Left lung (tissue), 14 donors: ENCODE measurements at regions of chrX and their contacts with region 1.

Region 1: GRCh38 chrX:12906046-12906761 is at the start of gene TLR8:
- DNase-seq: no peak
- ATAC-seq: no peak
- H3K4me3 ChIP-seq: peak within 1 kb of the TSS in 1 of 2 donors; percentile 41
- H3K27ac ChIP-seq: peak within 1 kb of the TSS; percentile 9 to 80
- H3K4me1 ChIP-seq: peaks cover 0 to 9% of the 10 kb centered on the region in 2 donors
- H3K27me3 ChIP-seq: no peaks in the 10 kb centered on the region
- CTCF ChIP-seq: no peak
- polyA plus RNA-seq, gene TLR8: 0.31 to 0.60 (median 0.50) TPM

Region 2: DNA sequence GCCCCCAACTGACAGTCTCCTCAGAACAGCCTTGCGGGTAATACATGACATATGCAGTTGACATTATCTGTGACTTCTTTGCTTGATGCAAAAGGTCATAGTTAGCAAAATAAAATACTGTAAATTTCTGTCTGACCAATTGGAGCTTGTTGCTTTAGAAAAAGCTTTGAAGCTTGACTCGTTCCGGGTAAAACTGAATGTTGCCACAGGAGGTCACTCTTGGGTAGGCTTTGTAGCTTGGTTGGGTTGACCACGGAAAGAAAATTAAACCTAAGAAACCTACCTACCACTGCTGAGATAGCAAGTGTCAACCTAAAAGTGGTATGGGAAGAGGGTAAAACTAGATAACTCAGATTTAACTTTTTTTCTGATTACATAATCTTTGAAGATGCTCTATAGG is 91.8 kb before region 1 on chrX:
- intact Hi-C with region 1: loop called in 1 of 2 experiments (anchors 5 kb)
- DNase-seq: peak in 2 of 4 donors; percentile 17 to 56
- ATAC-seq: peak; percentile 83
- H3K4me3 ChIP-seq: no peak overlapping the region
- H3K27ac ChIP-seq: no peak overlapping the region
- H3K4me1 ChIP-seq: no peaks in the 10 kb centered on the region
- H3K27me3 ChIP-seq: peaks cover 0 to 2% of the 10 kb centered on the region in 2 donors
- CTCF ChIP-seq: peak in 1 of 2 donors; percentile 33

Region 3: GRCh38 chrX:13151828-13152510 is 245.8 kb after region 1 on chrX:
- intact Hi-C with region 1: no loop called
- DNase-seq: peak in 1 of 4 donors; percentile 61
- ATAC-seq: peak; percentile 85
- H3K4me3 ChIP-seq: no peak overlapping the region
- H3K27ac ChIP-seq: peak overlapping the region; percentile 57 to 67
- H3K4me1 ChIP-seq: no peaks in the 10 kb centered on the region
- H3K27me3 ChIP-seq: no peaks in the 10 kb centered on the region
- CTCF ChIP-seq: no peak